PC-9 (cell line): ENCODE measurements at regions of chr18 and their contacts with region 1.

Region 1: GRCh38 chr18:3329471-3329870 is 67.5 kb downstream of the MYL12B start:
- DNase-seq: peak; percentile 33 to 43
- H3K4me3 ChIP-seq: no peak overlapping the region
- H3K27ac ChIP-seq: peak overlapping the region; percentile 34
- H3K4me1 ChIP-seq: peaks cover 21% of the 10 kb centered on the region
- H3K27me3 ChIP-seq: no peaks in the 10 kb centered on the region
- CTCF ChIP-seq: no peak

Region 2: GRCh38 chr18:3297025-3297984 is 32.2 kb before region 1 on chr18:
- CTCF ChIA-PET with region 1: no interaction called
- POLR2A ChIA-PET with region 1: no interaction called
- intact Hi-C with region 1: loop called (anchors 5 kb)
- DNase-seq: peak; percentile 94 to 95
- H3K4me3 ChIP-seq: peak overlapping the region; percentile 77
- H3K27ac ChIP-seq: peak overlapping the region; percentile 68
- H3K4me1 ChIP-seq: 0 out of 2 replicates have a peak, but pooled peaks cover 8% of the 10 kb centered on the region
- H3K27me3 ChIP-seq: no peaks in the 10 kb centered on the region
- CTCF ChIP-seq: peak; percentile 72